B cell (primary cell): ENCODE measurements at regions of chr3 and their contacts with region 1.

Region 1: GRCh38 chr3:16516695-16517481 is 3.4 kb upstream of the RFTN1 start:
- DNase-seq: peak; percentile 43
- ATAC-seq: no peak
- H3K4me3 ChIP-seq: peak overlapping the region in 1 of 5 experiments; percentile 32
- H3K4me3 Mint-ChIP-seq: peak overlapping the region; percentile 51
- H3K27ac ChIP-seq: peak overlapping the region; percentile 53 to 97
- H3K27ac Mint-ChIP-seq: peak overlapping the region; percentile 80
- H3K4me1 ChIP-seq: peaks cover 79 to 92% of the 10 kb centered on the region in 2 donors
- H3K4me1 Mint-ChIP-seq: peaks cover 82% of the 10 kb centered on the region
- H3K27me3 ChIP-seq: no peaks in the 10 kb centered on the region
- H3K27me3 Mint-ChIP-seq: no peaks in the 10 kb centered on the region
- CTCF ChIP-seq: no peak

Region 2: GRCh38 chr3:15942462-15942861 is 574.4 kb before region 1 on chr3:
- CTCF ChIA-PET with region 1: no interaction called
- POLR2A ChIA-PET with region 1: no interaction called
- intact Hi-C with region 1: no loop called
- DNase-seq: no peak
- ATAC-seq: no peak
- H3K4me3 ChIP-seq: no peak overlapping the region
- H3K4me3 Mint-ChIP-seq: no peak overlapping the region
- H3K27ac ChIP-seq: no peak overlapping the region
- H3K27ac Mint-ChIP-seq: no peak overlapping the region
- H3K4me1 ChIP-seq: no peaks in the 10 kb centered on the region
- H3K4me1 Mint-ChIP-seq: no peaks in the 10 kb centered on the region
- H3K27me3 ChIP-seq: no peaks in the 10 kb centered on the region
- H3K27me3 Mint-ChIP-seq: peaks cover 3% of the 10 kb centered on the region
- CTCF ChIP-seq: no peak

Region 3: DNA sequence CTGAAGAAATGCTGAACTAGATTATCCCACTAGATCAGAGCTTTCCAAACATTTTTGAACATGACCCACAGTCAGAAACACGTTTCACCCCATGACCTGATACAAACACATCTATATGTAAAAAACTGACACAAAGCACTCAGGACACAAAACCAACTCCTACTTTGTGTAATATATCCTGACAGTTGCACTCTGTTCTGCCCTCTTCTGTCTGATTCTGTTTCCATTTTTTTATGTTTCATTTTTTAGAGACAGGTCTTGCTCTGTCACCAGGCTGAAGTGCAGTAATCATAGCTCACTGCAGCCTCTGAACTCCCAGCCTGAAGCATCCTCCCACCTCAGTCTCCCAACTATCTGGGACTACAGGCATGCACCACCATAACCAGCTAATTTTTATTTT is 12.4 kb after region 1 on chr3:
- CTCF ChIA-PET with region 1: interaction called, 13 read pairs
- POLR2A ChIA-PET with region 1: no interaction called
- intact Hi-C with region 1: loop called (anchors 2 kb)
- DNase-seq: peak; percentile 52
- ATAC-seq: no peak
- H3K4me3 ChIP-seq: no peak overlapping the region
- H3K4me3 Mint-ChIP-seq: no peak overlapping the region
- H3K27ac ChIP-seq: no peak overlapping the region
- H3K27ac Mint-ChIP-seq: no peak overlapping the region
- H3K4me1 ChIP-seq: peaks cover 14 to 19% of the 10 kb centered on the region in 2 donors
- H3K4me1 Mint-ChIP-seq: peaks cover 15% of the 10 kb centered on the region
- H3K27me3 ChIP-seq: no peaks in the 10 kb centered on the region
- H3K27me3 Mint-ChIP-seq: no peaks in the 10 kb centered on the region
- CTCF ChIP-seq: peak; percentile 47